ENCODE measurements at regions of chr12 and their contacts with region 1.

Region 1: GRCh38 chr12:68040450-68041075 is 51.3 kb downstream of the IFNG-AS1 start:
- DNase-seq: peak; percentile 73
- CTCF ChIP-seq: peak; percentile 86

Region 2: DNA sequence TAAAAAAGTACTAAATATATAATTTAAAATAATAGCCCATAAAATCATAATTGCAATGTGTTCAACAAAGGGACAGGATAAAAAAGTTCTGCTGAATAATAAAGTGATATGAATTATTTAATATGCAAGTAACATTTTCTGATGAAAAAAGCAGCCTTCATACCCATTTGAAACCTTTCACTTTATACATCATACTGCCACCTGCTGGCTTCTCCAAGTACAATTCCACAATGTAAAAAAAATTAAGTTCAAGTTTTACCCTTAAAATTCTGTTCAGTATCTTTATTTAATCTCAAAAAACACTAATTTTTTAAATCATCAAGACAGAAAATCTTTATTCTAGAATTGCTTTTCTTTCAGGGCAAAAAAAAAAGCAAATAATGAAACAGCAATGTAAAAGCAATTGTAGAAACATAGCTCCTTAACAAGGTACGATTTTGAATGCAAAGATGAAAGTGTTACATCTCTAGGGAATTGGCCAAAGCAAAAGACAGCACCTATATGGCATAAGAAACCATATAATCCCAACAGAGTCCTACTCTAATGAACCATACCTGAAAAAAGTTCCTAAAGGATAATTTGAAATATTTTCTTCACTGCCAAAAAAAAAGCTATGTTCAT is 276.6 kb after region 1 on chr12:
- in situ Hi-C with region 1: loop called (anchors 25 kb)
- DNase-seq: peak; percentile 53
- CTCF ChIP-seq: peak; percentile 44

Region 3: GRCh38 chr12:68530965-68531364 is 490.4 kb after region 1 on chr12:
- in situ Hi-C with region 1: no loop called
- DNase-seq: no peak
- CTCF ChIP-seq: no peak

Region 4: DNA sequence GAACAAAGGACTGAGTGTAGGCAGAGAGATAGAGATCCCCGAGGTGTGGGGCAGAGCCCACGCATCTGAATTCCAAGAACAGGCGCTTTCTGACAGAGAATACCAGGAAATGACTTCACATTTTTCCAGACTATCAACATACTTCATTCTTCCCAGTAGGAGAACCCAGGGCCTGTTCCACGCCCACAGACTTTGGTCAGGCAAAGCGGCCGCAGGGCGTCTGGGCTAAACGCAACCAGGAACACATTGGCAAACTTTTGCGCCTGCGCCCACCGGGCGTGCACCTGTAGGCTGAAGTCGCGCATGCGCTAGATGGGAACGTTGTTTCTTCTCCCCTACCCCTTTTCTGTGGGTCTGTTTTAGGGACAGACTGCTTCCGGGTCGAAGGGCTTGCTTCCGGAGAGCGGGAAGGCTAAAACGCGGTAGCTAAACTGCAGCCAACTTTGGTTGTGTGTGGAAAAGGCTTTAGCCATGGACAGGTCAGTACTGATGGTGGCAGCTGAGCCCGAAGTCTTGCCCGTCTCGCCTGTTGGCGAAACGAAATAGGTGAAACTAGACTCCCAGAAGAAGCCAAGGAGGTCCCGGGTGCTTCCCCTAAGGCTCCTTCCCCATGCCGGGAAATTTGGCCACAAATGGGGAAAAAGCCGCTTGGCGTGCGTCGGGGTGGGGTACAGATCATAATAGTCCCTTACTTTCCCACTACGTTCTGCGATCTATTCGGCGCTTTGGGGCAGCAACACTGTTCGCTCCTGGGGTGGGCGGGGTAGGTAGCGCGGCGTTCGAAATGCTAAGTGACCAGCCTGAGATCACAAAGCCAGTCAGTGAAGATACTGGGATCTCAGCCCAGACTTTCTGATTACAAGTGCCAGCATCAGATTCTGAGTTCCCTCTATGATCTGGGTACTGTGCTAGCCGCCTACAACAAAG is 646.3 kb after region 1 on chr12 and contains the start of gene NUP107:
- in situ Hi-C with region 1: loop called (anchors 25 kb)
- DNase-seq: peak; percentile 92
- CTCF ChIP-seq: no peak

Measured in GM13976 (cell line).